ENCODE measurements at regions of chr3 and their contacts with region 1.

Region 1: GRCh38 chr3:184983-185382 is 11.6 kb upstream of the CHL1 start:
- DNase-seq: no peak
- H3K4me3 Mint-ChIP-seq: no peak overlapping the region
- H3K27ac Mint-ChIP-seq: no peak overlapping the region
- H3K4me1 Mint-ChIP-seq: no peaks in the 10 kb centered on the region
- H3K27me3 Mint-ChIP-seq: peaks cover 7% of the 10 kb centered on the region
- CTCF ChIP-seq: no peak

Region 2: GRCh38 chr3:1251282-1252060 is 1066.5 kb after region 1 on chr3:
- CTCF ChIA-PET with region 1: no interaction called
- intact Hi-C with region 1: loop called (anchors 5 kb)
- DNase-seq: no peak
- H3K4me3 Mint-ChIP-seq: no peak overlapping the region
- H3K27ac Mint-ChIP-seq: no peak overlapping the region
- H3K4me1 Mint-ChIP-seq: peaks cover 10% of the 10 kb centered on the region
- H3K27me3 Mint-ChIP-seq: no peaks in the 10 kb centered on the region
- CTCF ChIP-seq: no peak